Naive thymus-derived CD8-positive, alpha-beta T cell (primary cell): ENCODE measurements at regions of chr1 and their contacts with region 1.

Region 1: GRCh38 chr1:145885738-145886287 is at the start of gene ANKRD35:
- DNase-seq: peak; percentile 74 to 90 (median 85)
- ATAC-seq: peak; percentile 99
- H3K4me3 Mint-ChIP-seq: peak within 1 kb of the TSS; percentile 72 to 91 (median 84)
- H3K27ac Mint-ChIP-seq: peak within 1 kb of the TSS in 3 of 10 donors; percentile 10 to 74 (median 62)
- H3K4me1 Mint-ChIP-seq: peaks cover 10 to 18% (median 14%) of the 10 kb centered on the region in 4 donors
- H3K27me3 Mint-ChIP-seq: peaks cover 3 to 26% (median 17%) of the 10 kb centered on the region in 5 donors
- polyA plus RNA-seq, gene ANKRD35: 0.27 to 0.57 (median 0.42) TPM

Region 2: DNA sequence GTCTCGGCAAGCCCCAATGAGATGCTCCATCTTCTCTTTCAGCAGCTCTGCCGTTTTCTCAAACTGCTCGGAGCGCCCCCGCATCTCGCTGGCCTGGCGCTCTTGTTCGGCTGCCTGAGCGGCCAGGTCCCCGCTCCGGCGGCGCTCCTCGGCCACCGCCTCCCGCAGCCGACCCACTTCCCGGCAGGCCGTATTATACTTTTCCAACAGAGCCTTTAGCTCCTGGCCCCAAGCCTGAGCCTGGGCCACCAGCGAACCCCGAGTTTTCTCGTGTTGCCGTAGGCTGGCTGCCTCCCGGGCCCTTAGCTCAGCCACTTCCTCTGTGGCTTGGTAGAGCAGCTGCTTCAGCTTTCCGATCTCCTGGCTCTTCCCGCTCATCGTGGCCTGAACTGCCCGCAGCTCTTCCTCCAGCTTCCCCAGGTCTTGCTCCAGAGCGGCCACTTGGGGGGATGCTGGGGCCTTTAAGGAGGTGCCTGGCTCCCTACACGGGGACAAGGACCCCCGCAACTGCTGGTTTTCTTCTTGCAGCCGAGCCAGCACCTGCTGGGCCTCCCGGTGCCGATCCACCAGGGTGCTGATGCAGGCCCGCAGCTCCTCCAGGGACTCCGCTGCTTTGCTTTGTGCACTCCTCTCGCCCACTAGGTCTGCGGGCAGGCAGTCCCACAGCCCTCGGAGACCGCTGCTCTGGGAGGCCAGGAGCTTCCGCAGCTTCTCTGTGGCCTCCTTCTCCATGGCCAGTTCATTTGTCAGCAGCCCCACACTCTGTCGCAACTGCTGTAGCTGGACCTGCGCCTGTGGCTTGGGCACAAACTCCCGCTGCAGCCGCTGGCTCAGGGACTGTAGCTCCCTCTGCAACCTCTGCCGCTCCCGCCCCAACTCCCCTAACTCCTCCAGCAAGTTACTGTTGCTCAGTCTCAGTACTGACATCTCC is 13.6 kb before region 1 on chr1:
- POLR2A ChIA-PET with region 1: interaction called, 12 read pairs
- DNase-seq: peak in 7 of 10 donors; percentile 13 to 54 (median 36)
- ATAC-seq: peak; percentile 91 to 92
- H3K4me3 Mint-ChIP-seq: peak overlapping the region; percentile 75 to 88 (median 81)
- H3K27ac Mint-ChIP-seq: peak overlapping the region; percentile 75 to 94 (median 84)
- H3K4me1 Mint-ChIP-seq: peaks cover 9 to 20% (median 17%) of the 10 kb centered on the region in 4 donors
- H3K27me3 Mint-ChIP-seq: peaks cover 0 to 11% (median 2%) of the 10 kb centered on the region in 5 donors

Region 3: DNA sequence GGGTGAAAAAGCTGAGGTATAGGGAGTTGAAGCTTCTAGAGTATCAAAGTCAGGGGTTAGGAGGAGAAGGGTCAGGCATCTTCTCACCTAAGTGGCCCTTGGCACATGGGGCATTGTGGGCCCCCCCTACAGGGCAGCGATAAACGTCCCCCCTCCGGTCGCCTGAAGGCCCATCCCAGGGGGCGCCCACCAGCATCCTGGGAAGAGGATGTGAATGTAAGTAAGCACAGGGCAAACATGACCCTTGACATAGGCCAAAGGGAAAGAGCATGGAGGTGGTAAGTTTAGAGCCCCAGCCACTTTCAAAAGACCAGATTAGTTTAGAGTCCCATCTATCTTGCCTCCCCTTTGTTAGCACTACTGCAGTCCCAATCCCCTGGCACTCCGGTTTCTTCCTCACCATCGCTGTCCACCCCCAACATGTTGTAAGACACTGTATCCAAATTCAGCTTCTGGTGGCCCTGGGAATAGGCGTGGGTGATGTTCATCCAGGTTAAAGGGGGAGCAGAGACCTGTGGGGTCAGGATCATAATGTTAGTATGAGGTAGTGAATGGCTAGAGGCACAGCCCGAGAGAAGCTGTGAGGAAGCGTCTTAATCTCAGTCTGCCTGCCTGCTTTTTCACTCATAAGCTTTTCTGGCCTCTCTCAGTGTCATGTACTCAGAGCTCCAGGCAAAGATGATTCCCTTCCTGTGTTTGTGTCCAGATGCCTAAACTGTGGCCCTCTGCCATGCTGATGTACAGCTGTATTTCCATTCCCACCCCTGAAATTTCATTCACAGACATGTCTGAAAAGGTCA is 21.3 kb after region 1 on chr1:
- POLR2A ChIA-PET with region 1: no interaction called
- DNase-seq: no peak
- ATAC-seq: no peak
- H3K4me3 Mint-ChIP-seq: no peak overlapping the region
- H3K27ac Mint-ChIP-seq: peak overlapping the region in 3 of 10 donors; percentile 1 to 53 (median 22)
- H3K4me1 Mint-ChIP-seq: peaks cover 5 to 10% (median 7%) of the 10 kb centered on the region in 4 donors
- H3K27me3 Mint-ChIP-seq: no peaks in the 10 kb centered on the region